ENCODE measurements at regions of chr19 and their contacts with region 1.

Region 1: GRCh38 chr19:39124136-39124764 is 1.3 kb upstream of the PAK4 start:
- DNase-seq: no peak
- ATAC-seq: no peak
- H3K4me3 ChIP-seq: no peak overlapping the region
- H3K27ac ChIP-seq: no peak overlapping the region
- H3K4me1 ChIP-seq: peaks cover 5% of the 10 kb centered on the region; the same call in 1 of the 2 replicates
- H3K27me3 ChIP-seq: peaks cover 5% of the 10 kb centered on the region
- CTCF ChIP-seq: no peak
- POLR2A ChIP-seq: no peak
- RAD21 ChIP-seq: no peak

Region 2: GRCh38 chr19:38964738-38965137 is 159.5 kb before region 1 on chr19:
- CTCF ChIA-PET with region 1: interaction called, 4 read pairs
- POLR2A ChIA-PET with region 1: no interaction called
- dilution Hi-C with region 1: no loop called
- in situ Hi-C with region 1: no loop called
- intact Hi-C with region 1: loop called (anchors 2 kb)
- DNase-seq: no peak
- ATAC-seq: no peak
- H3K4me3 ChIP-seq: no peak overlapping the region
- H3K27ac ChIP-seq: no peak overlapping the region
- H3K4me1 ChIP-seq: no peaks in the 10 kb centered on the region
- H3K27me3 ChIP-seq: no peaks in the 10 kb centered on the region
- CTCF ChIP-seq: no peak
- POLR2A ChIP-seq: no peak
- RAD21 ChIP-seq: no peak

Region 3: GRCh38 chr19:39052243-39052746 is 72.0 kb before region 1 on chr19:
- CTCF ChIA-PET with region 1: no interaction called
- POLR2A ChIA-PET with region 1: no interaction called
- dilution Hi-C with region 1: no loop called
- in situ Hi-C with region 1: no loop called
- intact Hi-C with region 1: loop called (anchors 1 kb)
- DNase-seq: peak; percentile 58
- ATAC-seq: peak; percentile 81
- H3K4me3 ChIP-seq: no peak overlapping the region
- H3K27ac ChIP-seq: no peak overlapping the region
- H3K4me1 ChIP-seq: no peaks in the 10 kb centered on the region
- H3K27me3 ChIP-seq: peaks cover 10% of the 10 kb centered on the region
- CTCF ChIP-seq: peak; percentile 61
- POLR2A ChIP-seq: no peak
- RAD21 ChIP-seq: peak; percentile 71

Region 4: GRCh38 chr19:39098365-39099269 is 25.6 kb before region 1 on chr19:
- CTCF ChIA-PET with region 1: no interaction called
- POLR2A ChIA-PET with region 1: no interaction called
- dilution Hi-C with region 1: no loop called
- in situ Hi-C with region 1: no loop called
- intact Hi-C with region 1: no loop called
- DNase-seq: no peak
- ATAC-seq: no peak
- H3K4me3 ChIP-seq: no peak overlapping the region
- H3K27ac ChIP-seq: no peak overlapping the region
- H3K4me1 ChIP-seq: no peaks in the 10 kb centered on the region
- H3K27me3 ChIP-seq: peaks cover 17% of the 10 kb centered on the region
- CTCF ChIP-seq: no peak
- POLR2A ChIP-seq: no peak
- RAD21 ChIP-seq: no peak

Region 5: DNA sequence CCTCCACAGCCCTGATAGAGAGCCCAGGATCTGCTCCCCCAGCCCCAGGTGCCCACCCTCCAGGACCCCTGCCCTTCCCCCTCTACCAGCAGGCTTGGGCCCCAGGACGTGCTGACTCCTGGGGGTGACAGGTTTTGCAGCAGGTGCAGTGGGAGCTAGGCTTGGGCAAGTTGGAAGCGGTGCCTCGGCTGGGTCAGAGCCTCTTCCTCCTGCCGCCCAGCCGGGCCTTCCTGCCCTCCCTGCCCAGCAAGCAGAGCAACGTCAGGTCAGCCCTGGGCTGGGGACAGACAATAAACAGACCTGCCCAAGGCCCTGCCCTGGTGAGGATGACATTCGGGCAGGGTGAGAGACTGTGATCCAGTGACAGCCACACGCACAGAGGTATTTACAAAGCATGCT is 63.3 kb after region 1 on chr19:
- CTCF ChIA-PET with region 1: interaction called, 3 read pairs
- POLR2A ChIA-PET with region 1: no interaction called
- dilution Hi-C with region 1: no loop called
- in situ Hi-C with region 1: loop called (anchors 5 kb)
- intact Hi-C with region 1: loop called (anchors 1 kb)
- DNase-seq: no peak
- ATAC-seq: peak; percentile 7; the same call in 1 of the 2 replicates
- H3K4me3 ChIP-seq: no peak overlapping the region
- H3K27ac ChIP-seq: no peak overlapping the region
- H3K4me1 ChIP-seq: no peaks in the 10 kb centered on the region
- H3K27me3 ChIP-seq: peaks cover 5% of the 10 kb centered on the region; the same call in 1 of the 2 replicates
- CTCF ChIP-seq: no peak
- POLR2A ChIP-seq: no peak
- RAD21 ChIP-seq: no peak

Region 6: GRCh38 chr19:39328046-39328705 is 203.9 kb after region 1 on chr19:
- CTCF ChIA-PET with region 1: interaction called, 3 read pairs
- POLR2A ChIA-PET with region 1: no interaction called
- dilution Hi-C with region 1: no loop called
- in situ Hi-C with region 1: loop called (anchors 5 kb)
- intact Hi-C with region 1: loop called (anchors 1 kb)
- DNase-seq: peak; percentile 53
- ATAC-seq: peak; percentile 98
- H3K4me3 ChIP-seq: no peak overlapping the region
- H3K27ac ChIP-seq: no peak overlapping the region
- H3K4me1 ChIP-seq: no peaks in the 10 kb centered on the region
- H3K27me3 ChIP-seq: peaks cover 9% of the 10 kb centered on the region; the same call in 1 of the 2 replicates
- CTCF ChIP-seq: peak; percentile 95
- POLR2A ChIP-seq: peak; percentile 43; the same call in 1 of the 2 replicates
- RAD21 ChIP-seq: peak; percentile 96

Region 7: DNA sequence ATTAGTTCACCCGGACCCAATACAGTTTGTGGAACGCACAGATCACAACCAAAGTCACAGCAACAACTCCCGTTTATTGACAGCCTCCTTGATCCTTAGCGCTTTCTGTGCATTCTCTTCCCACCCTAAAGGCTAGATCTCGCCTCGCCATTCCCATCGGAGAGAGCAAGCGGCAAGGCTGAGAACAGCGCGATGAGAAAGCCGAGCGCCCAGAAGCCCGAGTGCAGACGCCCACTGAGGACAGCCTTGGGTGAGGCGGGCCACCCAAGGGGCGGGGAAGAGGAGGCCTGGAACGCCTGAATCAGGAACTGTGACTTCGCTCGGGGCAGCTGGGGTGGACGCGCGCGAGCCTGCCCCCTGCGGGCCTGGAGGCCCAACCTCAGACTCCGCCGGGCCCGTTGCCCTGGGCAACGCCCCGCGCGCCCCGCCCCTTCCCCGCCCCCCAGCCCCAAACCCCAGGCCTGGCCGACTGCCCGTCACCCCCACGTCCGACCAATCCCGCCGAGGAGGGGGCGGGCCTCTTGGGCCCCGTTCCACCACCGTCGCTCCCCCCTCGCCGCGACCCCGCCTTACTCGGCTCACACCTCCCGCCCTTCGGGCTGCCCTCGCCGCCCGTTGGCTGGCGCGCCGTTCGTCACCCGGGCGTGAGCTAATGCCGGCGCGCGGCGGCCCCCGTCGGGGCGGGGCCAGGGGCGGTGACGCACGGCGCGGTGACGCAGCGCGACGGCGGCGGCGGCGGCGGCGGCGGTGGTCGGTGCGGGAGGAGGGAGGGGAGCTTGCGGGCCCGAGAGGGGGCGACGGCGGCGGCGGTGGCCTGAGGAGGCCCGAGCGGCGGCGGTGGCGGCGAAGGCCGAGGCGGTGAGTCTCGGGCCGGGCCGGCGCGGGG is 217.7 kb after region 1 on chr19 and contains the start of gene SAMD4B:
- CTCF ChIA-PET with region 1: no interaction called
- POLR2A ChIA-PET with region 1: no interaction called
- dilution Hi-C with region 1: no loop called
- in situ Hi-C with region 1: no loop called
- intact Hi-C with region 1: loop called (anchors 5 kb)
- DNase-seq: peak; percentile 97
- ATAC-seq: peak; percentile 95
- H3K4me3 ChIP-seq: peak within 1 kb of the TSS; percentile 84
- H3K27ac ChIP-seq: peak within 1 kb of the TSS; percentile 84
- H3K4me1 ChIP-seq: peaks cover 11% of the 10 kb centered on the region
- H3K27me3 ChIP-seq: no peaks in the 10 kb centered on the region
- CTCF ChIP-seq: peak; percentile 80
- POLR2A ChIP-seq: peak; percentile 95
- RAD21 ChIP-seq: peak; percentile 25; the same call in 1 of the 2 replicates
- total RNA-seq, gene SAMD4B: 18.3 and 19.2 TPM in 2 replicates

Region 8: GRCh38 chr19:39412100-39412866 is 288.0 kb after region 1 on chr19 and contains the start of gene PLEKHG2:
- CTCF ChIA-PET with region 1: no interaction called
- POLR2A ChIA-PET with region 1: no interaction called
- dilution Hi-C with region 1: no loop called
- in situ Hi-C with region 1: no loop called
- intact Hi-C with region 1: loop called (anchors 2 kb)
- DNase-seq: peak; percentile 100
- ATAC-seq: peak; percentile 55
- H3K4me3 ChIP-seq: peak within 1 kb of the TSS; percentile 90
- H3K27ac ChIP-seq: peak within 1 kb of the TSS; percentile 98
- H3K4me1 ChIP-seq: peaks cover 26% of the 10 kb centered on the region
- H3K27me3 ChIP-seq: no peaks in the 10 kb centered on the region
- CTCF ChIP-seq: peak; percentile 75
- POLR2A ChIP-seq: peak; percentile 77
- RAD21 ChIP-seq: peak; percentile 54
- total RNA-seq, gene PLEKHG2: 6.5 and 7.8 TPM in 2 replicates